ENCODE measurements at regions of chr22 and their contacts with region 1.

Region 1: DNA sequence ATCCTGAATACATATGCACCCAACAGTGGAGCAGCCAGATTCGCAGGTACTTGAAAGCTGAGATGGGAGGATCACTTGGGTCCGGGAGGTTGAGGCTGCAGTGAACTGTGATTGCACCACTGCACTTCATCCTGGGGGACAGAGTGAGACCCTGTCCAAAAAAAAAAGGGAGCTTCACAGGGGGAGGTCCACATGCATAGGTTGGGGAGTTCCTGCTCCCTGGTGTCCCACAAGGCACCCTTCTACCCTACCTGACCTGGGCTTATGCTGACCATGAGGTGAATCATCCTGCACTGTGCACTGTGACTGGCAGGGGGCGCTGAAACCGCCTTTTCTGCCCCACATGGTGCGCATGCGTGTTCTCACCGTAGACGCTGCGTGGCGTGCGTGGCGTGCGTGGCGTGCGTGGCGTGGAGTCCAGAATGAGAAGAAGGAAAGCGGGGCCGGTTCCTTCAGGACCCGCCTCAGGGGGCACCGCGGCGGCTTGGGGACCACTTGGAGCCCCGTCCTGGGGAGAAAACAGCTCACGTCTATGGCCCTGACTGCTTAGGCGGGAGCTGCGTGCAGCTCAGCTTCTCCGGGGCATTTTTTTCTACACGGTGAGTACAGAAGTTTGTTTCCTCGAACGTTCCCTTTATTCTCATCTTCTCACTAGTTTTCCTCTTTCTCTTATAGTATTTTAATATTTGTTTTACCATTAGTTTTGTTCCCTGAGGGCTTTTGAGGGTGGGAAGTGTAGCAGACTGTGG is 116.6 kb upstream of the GRK3 start:
- DNase-seq: peak; percentile 95
- ATAC-seq: peak; percentile 96
- H3K4me3 Mint-ChIP-seq: peak overlapping the region; percentile 82
- H3K27ac Mint-ChIP-seq: peak overlapping the region; percentile 94
- H3K4me1 Mint-ChIP-seq: peaks cover 30% of the 10 kb centered on the region
- H3K27me3 Mint-ChIP-seq: no peaks in the 10 kb centered on the region
- CTCF ChIP-seq: peak; percentile 85

Region 2: GRCh38 chr22:25403811-25404471 is 43.9 kb before region 1 on chr22:
- CTCF ChIA-PET with region 1: interaction called, 12 read pairs
- POLR2A ChIA-PET with region 1: no interaction called
- intact Hi-C with region 1: no loop called
- DNase-seq: peak; percentile 36
- ATAC-seq: peak; percentile 18
- H3K4me3 Mint-ChIP-seq: peak overlapping the region; percentile 95
- H3K27ac Mint-ChIP-seq: peak overlapping the region; percentile 80
- H3K4me1 Mint-ChIP-seq: peaks cover 36% of the 10 kb centered on the region
- H3K27me3 Mint-ChIP-seq: no peaks in the 10 kb centered on the region
- CTCF ChIP-seq: no peak

Measured in activated CD8-positive, alpha-beta T cell treated with anti-CD3 and anti-CD28 coated beads for 36 hours (primary cell).